Activated T-helper 1 cell treated with anti-CD3 and anti-CD28 coated beads, Interleukin-12 subunit alpha, Interleukin-12 subunit beta, Interleukin-2, Interleukin-4 antibody, amounts not matched to agents 30 ng/mL and 10 ng/mL and 1 ng/mL, durations not matched to agents 14 hours and 24 hours and 36 hours (primary cell): ENCODE measurements at regions of chr4 and their contacts with region 1.

Region 1: DNA sequence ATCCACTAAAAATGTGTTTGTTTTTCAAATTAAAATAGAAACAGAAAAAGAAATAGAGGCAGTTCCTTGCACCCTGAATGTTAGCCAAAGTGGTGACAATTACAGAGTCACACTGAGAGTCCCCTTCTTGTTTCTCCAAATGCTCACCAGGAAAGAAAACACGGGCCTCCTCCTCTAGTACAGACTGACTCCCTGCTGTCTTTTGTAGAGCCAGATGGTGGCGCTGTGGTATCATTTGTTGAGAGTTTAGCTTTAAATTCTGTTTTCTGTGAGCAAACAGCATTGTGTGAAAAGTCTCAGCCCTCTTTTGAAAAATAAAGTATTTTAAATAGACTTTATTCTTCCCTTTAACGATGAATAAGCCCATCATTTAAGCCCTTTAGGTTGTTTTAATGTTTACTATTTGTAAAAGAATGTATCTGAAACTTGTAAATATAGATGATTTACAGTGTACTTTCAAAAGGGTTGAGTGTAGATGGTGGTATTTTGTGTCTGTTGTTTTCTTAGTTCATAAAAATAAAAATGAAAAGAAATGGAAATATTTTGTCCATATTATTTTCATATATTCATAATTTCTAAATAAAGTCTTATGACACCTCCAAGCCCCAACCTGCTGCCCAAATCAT is 36.9 kb upstream of the ATOH1 start:
- DNase-seq: no peak
- H3K4me3 Mint-ChIP-seq: no peak overlapping the region
- H3K27ac Mint-ChIP-seq: no peak overlapping the region
- H3K4me1 Mint-ChIP-seq: no peaks in the 10 kb centered on the region
- H3K27me3 Mint-ChIP-seq: no peaks in the 10 kb centered on the region

Region 2: DNA sequence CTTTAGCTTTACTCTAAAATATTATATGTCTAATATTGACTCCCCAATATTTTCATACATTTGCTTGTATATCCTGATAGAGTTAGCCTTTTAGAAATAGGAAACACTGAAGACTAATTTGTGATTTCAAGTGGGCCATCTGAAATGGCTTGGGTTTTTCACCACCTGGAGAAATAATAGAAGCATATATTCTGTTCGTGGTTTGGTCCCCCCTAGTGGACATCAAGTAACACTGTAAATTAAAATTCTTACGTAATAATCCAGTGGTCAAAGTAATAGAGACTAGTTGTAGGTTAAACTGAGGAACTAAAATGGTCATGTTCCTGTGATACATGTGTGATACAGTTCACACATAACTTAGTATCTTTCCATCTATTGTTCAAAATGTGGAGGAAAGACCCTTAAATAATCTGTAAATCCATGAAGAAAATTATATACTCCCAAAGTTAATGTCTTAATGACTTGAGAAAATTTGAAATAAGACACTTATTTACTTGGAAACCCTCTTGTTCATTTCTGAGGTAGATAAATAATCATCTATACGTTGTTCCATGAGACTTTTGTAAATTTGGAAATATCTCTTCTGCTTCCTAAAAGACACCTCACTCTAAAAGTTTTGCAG is 336.1 kb after region 1 on chr4:
- intact Hi-C with region 1: loop called (anchors 2 kb)
- DNase-seq: no peak
- H3K4me3 Mint-ChIP-seq: no peak overlapping the region
- H3K27ac Mint-ChIP-seq: no peak overlapping the region
- H3K4me1 Mint-ChIP-seq: no peaks in the 10 kb centered on the region
- H3K27me3 Mint-ChIP-seq: no peaks in the 10 kb centered on the region

Region 3: GRCh38 chr4:94256828-94257227 is 465.1 kb after region 1 on chr4:
- intact Hi-C with region 1: loop called (anchors 1 kb)
- DNase-seq: no peak
- H3K4me3 Mint-ChIP-seq: no peak overlapping the region
- H3K27ac Mint-ChIP-seq: no peak overlapping the region
- H3K4me1 Mint-ChIP-seq: no peaks in the 10 kb centered on the region
- H3K27me3 Mint-ChIP-seq: no peaks in the 10 kb centered on the region

Region 4: DNA sequence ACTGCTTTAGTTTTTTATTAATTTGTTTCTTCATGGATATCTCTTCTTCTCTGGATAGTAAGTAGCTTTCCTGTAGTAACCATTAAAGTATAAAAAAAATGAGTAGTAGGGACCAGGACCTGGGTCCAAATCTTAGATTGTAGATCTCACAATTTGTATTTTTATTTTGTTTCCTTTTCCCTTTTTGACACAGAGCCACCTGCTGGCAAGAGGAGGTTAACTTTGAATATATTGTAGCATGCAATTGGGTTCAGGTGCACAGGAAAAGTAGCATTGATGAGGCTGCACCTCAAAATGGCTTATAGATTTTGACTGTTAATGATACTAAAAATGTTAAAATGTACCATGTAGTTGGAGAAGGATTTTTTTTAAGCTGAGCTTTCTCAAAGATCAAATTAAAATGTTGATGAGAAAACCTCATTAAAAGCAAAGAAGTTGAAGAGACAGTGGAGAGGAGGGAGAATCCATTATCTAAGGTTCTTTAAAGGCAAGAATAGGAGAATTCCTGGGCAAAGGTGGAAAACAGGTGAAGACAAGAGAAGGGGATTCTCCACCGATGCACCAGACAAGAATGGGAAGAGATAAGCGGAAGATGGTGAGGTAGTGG is 599.2 kb after region 1 on chr4:
- intact Hi-C with region 1: loop called (anchors 1 kb)
- DNase-seq: no peak
- H3K4me3 Mint-ChIP-seq: no peak overlapping the region
- H3K27ac Mint-ChIP-seq: no peak overlapping the region
- H3K4me1 Mint-ChIP-seq: no peaks in the 10 kb centered on the region
- H3K27me3 Mint-ChIP-seq: peaks cover 8% of the 10 kb centered on the region

Region 5: DNA sequence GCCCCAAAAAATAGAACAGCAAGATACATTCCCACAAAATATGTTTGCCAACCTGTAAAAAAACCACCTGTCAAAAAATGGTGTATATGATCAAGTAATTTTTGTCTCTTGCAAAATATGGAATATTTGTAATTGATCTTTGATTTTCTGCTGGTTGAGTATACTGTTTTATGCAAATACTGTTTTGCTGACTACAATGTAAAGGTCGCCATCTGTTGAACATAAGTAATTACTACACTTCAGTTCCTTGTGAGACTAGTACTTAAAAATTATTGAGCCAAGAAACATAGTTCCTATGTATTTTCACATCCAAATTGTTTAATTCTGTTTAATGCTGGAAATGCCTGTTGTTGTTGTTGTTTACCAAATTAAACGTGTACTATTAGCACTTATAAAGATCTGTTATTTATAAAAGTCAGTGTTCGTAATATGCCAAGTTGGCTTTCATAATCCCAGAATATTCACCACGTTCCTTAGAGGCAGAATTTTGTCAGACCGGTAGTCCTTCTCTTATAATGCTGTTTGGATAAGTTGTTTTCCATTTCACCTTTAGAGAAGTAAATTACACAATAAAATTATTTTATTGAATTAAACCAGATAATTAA is 804.3 kb after region 1 on chr4:
- intact Hi-C with region 1: loop called (anchors 5 kb)
- DNase-seq: no peak
- H3K4me3 Mint-ChIP-seq: no peak overlapping the region
- H3K27ac Mint-ChIP-seq: no peak overlapping the region
- H3K4me1 Mint-ChIP-seq: no peaks in the 10 kb centered on the region
- H3K27me3 Mint-ChIP-seq: no peaks in the 10 kb centered on the region

Region 6: DNA sequence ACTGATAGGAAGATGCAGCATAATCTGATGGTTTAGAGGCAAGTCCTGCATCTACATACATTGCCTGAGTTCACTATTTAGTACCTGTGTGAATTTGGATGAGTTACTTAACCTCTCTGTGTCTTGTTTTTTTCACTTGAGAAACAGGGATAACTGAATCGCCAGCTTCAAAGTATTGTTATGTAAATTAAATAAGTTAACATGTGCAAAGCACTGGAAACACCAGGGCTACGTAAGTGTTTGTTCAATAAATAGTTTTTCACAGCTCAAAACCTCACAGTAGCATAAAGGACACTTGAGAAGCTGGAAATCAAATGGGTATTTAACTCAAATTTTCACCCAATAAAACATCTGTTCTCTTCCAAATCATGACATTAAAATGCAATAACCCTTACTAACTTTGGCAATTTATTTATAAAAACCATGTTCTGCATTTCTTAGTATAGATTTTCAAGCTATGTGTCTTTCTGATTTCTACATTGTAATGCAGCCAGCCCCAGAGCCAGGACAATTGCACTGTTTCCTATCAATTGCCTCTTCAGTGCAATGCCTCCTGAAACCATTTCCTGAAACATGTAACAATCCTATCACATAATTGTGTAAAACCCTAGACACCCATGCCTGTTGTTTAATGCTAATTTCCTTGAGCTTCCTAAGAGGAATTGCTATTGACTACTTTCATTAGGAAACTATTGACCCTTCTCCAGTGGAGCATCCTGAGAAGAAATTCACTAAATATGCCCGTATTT is 1580.0 kb after region 1 on chr4:
- intact Hi-C with region 1: no loop called
- DNase-seq: no peak
- H3K4me3 Mint-ChIP-seq: no peak overlapping the region
- H3K27ac Mint-ChIP-seq: no peak overlapping the region
- H3K4me1 Mint-ChIP-seq: no peaks in the 10 kb centered on the region
- H3K27me3 Mint-ChIP-seq: no peaks in the 10 kb centered on the region